Aorta (tissue), 5 donors: ENCODE measurements at regions of chr3 and their contacts with region 1.

Region 1: DNA sequence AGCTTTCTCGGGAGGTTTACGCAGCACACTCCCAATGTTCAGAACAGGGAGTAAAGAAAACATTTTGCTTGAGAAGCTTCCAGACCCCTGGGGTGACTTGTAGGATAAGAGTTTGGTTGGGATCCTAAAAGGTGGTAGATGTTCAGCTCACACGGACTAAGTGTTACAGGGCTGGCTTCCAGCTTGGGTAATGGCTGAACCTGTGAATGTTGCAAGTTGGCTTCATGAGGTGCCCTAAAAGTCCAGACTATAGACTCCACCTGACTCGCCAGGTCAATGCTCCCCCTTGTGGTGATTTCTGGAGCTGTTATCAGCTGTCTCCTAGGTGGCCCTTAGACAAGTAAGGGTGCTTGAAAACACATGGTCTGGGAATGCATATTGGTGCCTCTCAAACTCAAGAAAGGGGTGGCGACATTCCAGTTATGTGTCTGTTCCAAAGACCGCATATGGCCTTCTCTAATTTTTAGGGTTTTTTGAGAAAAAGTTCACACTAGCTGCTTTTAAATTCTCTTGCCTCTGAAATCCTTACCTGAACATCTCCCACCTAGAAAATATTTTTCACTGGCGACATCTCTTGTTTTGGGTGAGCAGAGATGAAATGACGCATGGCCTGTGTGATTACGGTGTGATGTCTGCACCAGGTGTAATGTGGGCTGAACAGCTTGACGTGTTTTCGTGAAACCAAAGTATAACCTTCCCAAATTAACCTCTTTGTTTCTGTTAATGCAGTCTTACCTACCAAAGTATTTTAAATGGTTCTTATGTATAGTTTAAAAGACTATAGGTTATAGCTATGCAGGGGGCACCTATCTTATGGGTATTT is 175.7 kb upstream of the KBTBD8 start:
- DNase-seq: peak in 1 of 2 donors; percentile 76
- ATAC-seq: peak; percentile 75
- H3K4me3 ChIP-seq: no peak overlapping the region
- H3K27ac ChIP-seq: no peak overlapping the region
- H3K4me1 ChIP-seq: peaks cover 0 to 2% of the 10 kb centered on the region in 2 donors
- H3K27me3 ChIP-seq: no peaks in the 10 kb centered on the region

Region 2: GRCh38 chr3:66276705-66277274 is 545.6 kb before region 1 on chr3:
- intact Hi-C with region 1: loop called (anchors 5 kb)
- DNase-seq: no peak
- ATAC-seq: no peak
- H3K4me3 ChIP-seq: no peak overlapping the region
- H3K27ac ChIP-seq: no peak overlapping the region
- H3K4me1 ChIP-seq: no peaks in the 10 kb centered on the region
- H3K27me3 ChIP-seq: no peaks in the 10 kb centered on the region

Region 3: DNA sequence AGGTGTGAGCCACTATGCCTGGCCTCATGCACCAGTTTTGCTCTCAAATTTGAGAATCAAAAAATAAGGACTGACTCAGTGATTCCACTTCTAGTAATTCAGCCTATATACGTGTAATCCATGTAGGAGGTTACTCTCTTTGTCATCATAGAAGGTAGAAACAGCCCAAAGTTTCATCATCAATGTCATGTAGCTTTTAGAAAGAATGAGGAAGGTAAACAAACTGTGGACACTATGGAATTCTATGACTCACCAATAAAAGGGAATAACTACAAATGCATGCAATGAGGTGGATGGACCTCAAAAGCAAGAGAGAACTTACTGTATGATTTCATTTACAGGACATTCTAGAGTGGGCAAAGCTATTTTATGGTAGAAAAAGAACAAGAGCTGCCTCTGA is 228.4 kb before region 1 on chr3:
- intact Hi-C with region 1: no loop called
- DNase-seq: no peak
- ATAC-seq: no peak
- H3K4me3 ChIP-seq: no peak overlapping the region
- H3K27ac ChIP-seq: no peak overlapping the region
- H3K4me1 ChIP-seq: peaks cover 2 to 4% of the 10 kb centered on the region in 2 donors
- H3K27me3 ChIP-seq: no peaks in the 10 kb centered on the region

Region 4: DNA sequence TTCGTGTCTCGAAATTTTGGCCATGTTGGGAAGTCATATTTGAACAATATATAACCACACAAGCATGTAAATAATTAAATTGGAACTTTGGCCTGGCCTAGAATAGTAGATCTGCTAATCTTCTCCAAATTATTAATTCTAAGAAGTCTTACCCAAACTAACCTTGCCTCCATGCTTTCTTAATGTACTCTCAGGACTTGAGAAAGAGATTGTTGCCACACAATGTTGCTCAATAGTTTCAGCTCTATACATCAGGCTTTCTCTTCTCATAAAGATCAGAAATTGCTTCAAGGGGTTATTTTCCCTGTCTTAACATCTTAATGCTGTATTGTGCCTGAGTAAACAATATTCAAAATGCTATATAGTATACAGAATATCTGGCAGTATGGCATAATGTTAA is 118.9 kb before region 1 on chr3:
- intact Hi-C with region 1: no loop called
- DNase-seq: no peak
- ATAC-seq: no peak
- H3K4me3 ChIP-seq: no peak overlapping the region
- H3K27ac ChIP-seq: no peak overlapping the region
- H3K4me1 ChIP-seq: no peaks in the 10 kb centered on the region
- H3K27me3 ChIP-seq: no peaks in the 10 kb centered on the region

Region 5: GRCh38 chr3:66836363-66837152 is 14.2 kb after region 1 on chr3:
- intact Hi-C with region 1: no loop called
- DNase-seq: no peak
- ATAC-seq: no peak
- H3K4me3 ChIP-seq: no peak overlapping the region
- H3K27ac ChIP-seq: no peak overlapping the region
- H3K4me1 ChIP-seq: no peaks in the 10 kb centered on the region
- H3K27me3 ChIP-seq: peaks cover 0 to 2% of the 10 kb centered on the region in 2 donors